CD8-positive, alpha-beta memory T cell (primary cell): ENCODE measurements at regions of chrX and their contacts with region 1.

Region 1: DNA sequence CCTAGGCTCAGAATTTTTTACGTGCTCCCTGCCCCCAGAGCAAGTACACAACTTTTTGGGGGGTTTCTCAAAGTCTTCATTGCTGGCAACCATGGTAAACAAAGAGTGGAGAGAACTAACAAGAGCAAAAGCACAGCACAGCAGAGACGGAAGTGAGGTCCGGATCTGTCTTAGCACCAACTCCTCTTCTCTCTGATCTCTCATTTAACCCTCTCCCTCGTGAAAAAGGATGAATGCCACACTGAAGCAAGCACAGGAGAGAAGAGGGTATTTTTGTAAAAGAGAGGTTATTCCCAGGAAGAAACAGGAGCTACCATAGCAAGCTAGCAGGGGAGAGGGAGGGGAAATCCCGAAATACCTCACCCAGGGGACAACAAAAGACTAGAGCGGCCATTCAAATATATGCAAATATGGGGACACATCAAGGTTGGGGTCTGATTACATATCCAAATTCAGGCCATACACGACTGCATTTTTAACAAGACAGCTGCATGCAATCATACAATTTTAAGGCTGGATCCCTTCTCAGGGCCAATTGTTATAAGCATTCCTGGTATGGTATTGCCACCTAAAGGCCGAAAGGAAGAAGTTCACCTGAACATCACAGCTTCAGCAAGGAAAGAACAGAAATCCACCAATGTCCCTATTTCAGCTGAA is 46.6 kb downstream of the CD40LG start:
- DNase-seq: peak in 3 of 5 donors; percentile 44 to 60 (median 50)
- H3K4me3 ChIP-seq: peak overlapping the region; percentile 38
- H3K4me3 Mint-ChIP-seq: peak overlapping the region; percentile 10 to 77 (median 69)
- H3K27ac ChIP-seq: peak overlapping the region; percentile 38
- H3K27ac Mint-ChIP-seq: peak overlapping the region; percentile 89 to 98 (median 93)
- H3K4me1 ChIP-seq: peaks cover 71% of the 10 kb centered on the region
- H3K4me1 Mint-ChIP-seq: peaks cover 60 to 77% (median 71%) of the 10 kb centered on the region in 3 donors
- H3K27me3 ChIP-seq: no peaks in the 10 kb centered on the region
- H3K27me3 Mint-ChIP-seq: peaks cover 0 to 3% of the 10 kb centered on the region in 2 donors

Region 2: GRCh38 chrX:136577552-136577951 is 117.0 kb before region 1 on chrX:
- CTCF ChIA-PET with region 1: interaction called, 36 read pairs
- POLR2A ChIA-PET with region 1: no interaction called
- DNase-seq: peak; percentile 32 to 77 (median 51)
- H3K4me3 ChIP-seq: no peak overlapping the region
- H3K4me3 Mint-ChIP-seq: peak overlapping the region in 1 of 7 donors; percentile 8
- H3K27ac ChIP-seq: no peak overlapping the region
- H3K27ac Mint-ChIP-seq: peak overlapping the region in 6 of 8 donors; percentile 53 to 85 (median 78)
- H3K4me1 ChIP-seq: no peaks in the 10 kb centered on the region
- H3K4me1 Mint-ChIP-seq: peaks cover 10 to 13% (median 12%) of the 10 kb centered on the region in 3 donors
- H3K27me3 ChIP-seq: no peaks in the 10 kb centered on the region
- H3K27me3 Mint-ChIP-seq: peaks cover 0 to 2% of the 10 kb centered on the region in 2 donors

Region 3: GRCh38 chrX:136711147-136711546 is 16.6 kb after region 1 on chrX:
- CTCF ChIA-PET with region 1: interaction called, 11 read pairs
- POLR2A ChIA-PET with region 1: no interaction called
- DNase-seq: no peak
- H3K4me3 ChIP-seq: no peak overlapping the region
- H3K4me3 Mint-ChIP-seq: no peak overlapping the region
- H3K27ac ChIP-seq: no peak overlapping the region
- H3K27ac Mint-ChIP-seq: peak overlapping the region in 7 of 8 donors; percentile 23 to 94 (median 85)
- H3K4me1 ChIP-seq: peaks cover 27% of the 10 kb centered on the region
- H3K4me1 Mint-ChIP-seq: peaks cover 25 to 47% (median 41%) of the 10 kb centered on the region in 3 donors
- H3K27me3 ChIP-seq: no peaks in the 10 kb centered on the region
- H3K27me3 Mint-ChIP-seq: peaks cover 0 to 2% of the 10 kb centered on the region in 2 donors